ENCODE measurements at regions of chr9 and their contacts with region 1.

Region 1: GRCh38 chr9:112605518-112605917 is 112.4 kb downstream of the INIP start:
- DNase-seq: no peak
- H3K4me3 ChIP-seq: no peak overlapping the region
- H3K27ac ChIP-seq: no peak overlapping the region
- H3K4me1 ChIP-seq: 0 out of 2 replicates have a peak, but pooled peaks cover 5% of the 10 kb centered on the region
- H3K27me3 ChIP-seq: no peaks in the 10 kb centered on the region
- CTCF ChIP-seq: no peak

Region 2: GRCh38 chr9:112433499-112434392 is 171.8 kb before region 1 on chr9:
- CTCF ChIA-PET with region 1: no interaction called
- POLR2A ChIA-PET with region 1: no interaction called
- intact Hi-C with region 1: no loop called
- DNase-seq: no peak
- H3K4me3 ChIP-seq: no peak overlapping the region
- H3K27ac ChIP-seq: no peak overlapping the region
- H3K4me1 ChIP-seq: no peaks in the 10 kb centered on the region
- H3K27me3 ChIP-seq: no peaks in the 10 kb centered on the region
- CTCF ChIP-seq: no peak

Region 3: DNA sequence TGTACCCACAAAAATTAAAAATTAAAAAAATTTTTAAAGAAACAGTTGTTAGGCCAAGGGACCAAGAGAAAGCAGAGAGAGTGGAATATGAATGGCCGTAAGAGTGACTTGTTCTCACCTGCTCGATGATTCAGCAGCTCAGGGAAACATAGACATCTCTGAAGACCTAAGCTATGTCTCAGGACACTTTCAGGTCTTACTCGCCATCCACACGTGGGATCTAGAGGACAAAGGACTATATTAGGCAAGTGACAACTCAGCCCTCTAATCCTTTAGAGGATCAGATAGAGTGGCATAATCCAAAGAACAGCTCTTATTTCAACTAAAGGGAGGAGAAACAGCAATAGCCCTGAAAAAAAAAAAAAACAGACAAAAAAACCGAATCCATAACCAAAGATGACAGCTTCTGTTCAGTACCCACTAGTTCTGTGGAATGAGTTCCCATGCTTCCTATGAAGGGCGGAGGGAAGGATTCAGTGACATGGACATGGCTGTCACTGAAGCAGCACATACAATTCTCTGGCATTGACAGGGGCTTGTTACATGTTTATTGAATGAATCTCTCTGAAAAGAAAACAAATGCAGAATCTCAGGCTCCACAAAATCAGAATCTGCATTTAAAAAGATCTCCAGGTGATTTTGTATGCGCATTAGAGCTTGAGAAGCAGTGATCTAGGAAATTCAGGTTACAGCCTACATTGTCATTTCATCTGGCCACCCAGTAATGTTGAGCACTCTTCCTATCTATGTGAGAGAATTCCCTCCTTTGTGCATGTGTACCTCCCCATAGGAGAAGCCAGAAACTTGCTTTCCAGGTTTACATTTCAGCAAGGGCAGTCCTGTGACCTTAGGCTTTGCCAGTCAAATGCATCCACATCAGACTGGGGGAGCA is 22.9 kb before region 1 on chr9:
- CTCF ChIA-PET with region 1: no interaction called
- POLR2A ChIA-PET with region 1: interaction called, 11 read pairs
- intact Hi-C with region 1: no loop called
- DNase-seq: no peak
- H3K4me3 ChIP-seq: no peak overlapping the region
- H3K27ac ChIP-seq: no peak overlapping the region
- H3K4me1 ChIP-seq: no peaks in the 10 kb centered on the region
- H3K27me3 ChIP-seq: no peaks in the 10 kb centered on the region
- CTCF ChIP-seq: no peak

Measured in PC-9 (cell line).